Heart left ventricle (tissue), 16 donors: ENCODE measurements at regions of chr18 and their contacts with region 1.

Region 1: GRCh38 chr18:26370037-26370436 is 143.8 kb downstream of the TAF4B start:
- DNase-seq: no peak
- ATAC-seq: no peak
- H3K4me3 ChIP-seq: no peak overlapping the region
- H3K27ac ChIP-seq: no peak overlapping the region
- H3K4me1 ChIP-seq: no peaks in the 10 kb centered on the region
- H3K27me3 ChIP-seq: no peaks in the 10 kb centered on the region
- CTCF ChIP-seq: no peak
- POLR2A ChIP-seq: no peak

Region 2: DNA sequence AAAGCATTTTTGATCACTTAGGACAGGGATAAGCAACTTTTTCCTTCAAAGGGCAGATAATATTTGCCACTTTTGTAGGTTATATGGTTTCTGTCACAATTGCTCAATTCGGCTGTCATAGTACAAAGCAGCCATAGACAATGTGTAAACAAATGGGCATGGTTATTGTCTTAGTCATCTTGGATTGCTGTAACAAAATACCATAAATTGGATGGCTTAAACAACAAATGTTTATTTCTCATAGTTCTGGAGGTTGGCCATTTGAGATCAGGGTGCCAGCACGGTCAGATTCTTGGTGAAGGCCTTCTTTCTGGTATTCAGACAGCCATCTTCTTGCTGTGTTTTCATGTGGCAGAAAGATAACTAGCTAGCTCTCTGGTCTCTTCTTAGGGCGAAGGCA is 52.6 kb before region 1 on chr18:
- intact Hi-C with region 1: loop called in 1 of 10 experiments (anchors 10 kb)
- DNase-seq: no peak
- ATAC-seq: no peak
- H3K4me3 ChIP-seq: no peak overlapping the region
- H3K27ac ChIP-seq: no peak overlapping the region
- H3K4me1 ChIP-seq: no peaks in the 10 kb centered on the region
- H3K27me3 ChIP-seq: no peaks in the 10 kb centered on the region
- CTCF ChIP-seq: no peak
- POLR2A ChIP-seq: no peak

Region 3: DNA sequence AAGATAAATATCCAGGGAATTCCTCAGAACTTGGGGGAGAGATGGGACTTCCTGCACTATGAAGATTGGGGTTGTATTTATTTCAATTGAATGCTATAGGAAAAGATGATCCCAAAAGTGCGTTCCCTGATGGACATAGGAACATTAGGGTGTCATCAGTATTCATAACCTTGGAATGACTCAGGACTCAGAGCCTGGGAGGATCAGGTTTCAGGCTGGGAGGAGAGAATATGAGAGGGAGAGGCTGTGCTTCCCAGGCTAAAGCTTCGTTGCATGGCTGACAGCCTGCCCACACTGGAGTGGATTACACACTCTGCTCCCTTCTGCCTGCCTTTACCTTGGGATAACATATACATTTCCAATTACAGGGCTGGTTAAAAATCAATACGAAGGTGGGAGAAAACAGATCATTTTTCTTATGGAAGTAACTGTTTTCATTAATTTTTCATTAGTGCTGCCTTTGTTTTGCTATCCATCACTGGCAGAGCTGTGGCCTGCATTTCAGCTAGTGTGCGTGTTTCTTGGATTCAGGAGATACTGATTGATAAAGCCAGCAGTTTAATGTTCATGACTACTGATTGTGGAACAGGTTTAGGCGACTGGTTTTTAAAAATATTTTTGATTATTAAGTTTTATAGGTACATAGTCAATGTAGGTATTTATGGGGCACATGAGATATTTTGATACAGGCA is 59.6 kb after region 1 on chr18:
- intact Hi-C with region 1: no loop called
- DNase-seq: no peak
- ATAC-seq: peak in 2 of 4 donors; percentile 51 to 64
- H3K4me3 ChIP-seq: no peak overlapping the region
- H3K27ac ChIP-seq: no peak overlapping the region
- H3K4me1 ChIP-seq: no peaks in the 10 kb centered on the region
- H3K27me3 ChIP-seq: no peaks in the 10 kb centered on the region
- CTCF ChIP-seq: no peak
- POLR2A ChIP-seq: no peak